ENCODE measurements at regions of chr14 and their contacts with region 1.

Region 1: DNA sequence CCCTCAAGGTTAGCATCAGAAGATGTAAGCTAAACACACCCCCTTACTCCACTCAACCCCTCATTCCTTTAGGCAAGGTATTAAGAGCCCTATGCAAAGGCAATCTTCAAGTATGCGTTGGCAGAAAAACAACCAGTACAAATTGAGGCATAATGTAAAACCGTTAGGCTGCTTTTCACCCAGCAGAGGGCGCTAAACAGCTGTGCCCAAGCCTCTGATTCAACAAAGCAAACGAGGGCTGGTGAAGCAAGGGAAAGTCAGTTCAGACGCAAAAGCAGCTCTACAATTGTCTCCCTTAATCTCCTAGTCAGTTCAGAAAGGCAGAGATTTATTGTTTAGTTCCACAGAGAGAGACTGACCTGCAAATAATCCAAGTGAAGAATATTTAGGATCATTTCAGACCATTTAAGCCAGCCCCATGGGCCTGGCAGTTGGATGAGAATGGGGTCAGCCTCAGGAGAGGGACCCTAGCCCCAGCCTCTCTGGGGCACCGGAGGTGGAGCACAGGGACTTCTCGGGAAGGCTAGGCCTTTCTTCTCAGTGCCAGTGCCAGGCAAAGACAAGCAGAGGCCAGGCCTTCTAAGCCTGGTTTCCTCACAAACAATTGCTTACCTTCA is 23.5 kb downstream of the DCAF5 start:
- DNase-seq: peak; percentile 69
- ATAC-seq: peak; percentile 95
- H3K4me3 ChIP-seq: no peak overlapping the region
- H3K27ac ChIP-seq: peak overlapping the region; percentile 72; the same call in 1 of the 2 replicates
- H3K4me1 ChIP-seq: peaks cover 25% of the 10 kb centered on the region
- H3K27me3 ChIP-seq: no peaks in the 10 kb centered on the region
- CTCF ChIP-seq: peak; percentile 91

Region 2: GRCh38 chr14:68939893-68940613 is 189.3 kb before region 1 on chr14:
- CTCF ChIA-PET with region 1: no interaction called
- POLR2A ChIA-PET with region 1: no interaction called
- in situ Hi-C with region 1: no loop called
- intact Hi-C with region 1: no loop called
- DNase-seq: peak; percentile 83
- ATAC-seq: peak; percentile 61
- H3K4me3 ChIP-seq: 0 out of 4 replicates have a peak overlapping the region, but pooled peaks of 1 of the 2 experiments have one; percentile 12
- H3K27ac ChIP-seq: peak overlapping the region; percentile 75
- H3K4me1 ChIP-seq: peaks cover 76% of the 10 kb centered on the region
- H3K27me3 ChIP-seq: no peaks in the 10 kb centered on the region
- CTCF ChIP-seq: no peak

Region 3: DNA sequence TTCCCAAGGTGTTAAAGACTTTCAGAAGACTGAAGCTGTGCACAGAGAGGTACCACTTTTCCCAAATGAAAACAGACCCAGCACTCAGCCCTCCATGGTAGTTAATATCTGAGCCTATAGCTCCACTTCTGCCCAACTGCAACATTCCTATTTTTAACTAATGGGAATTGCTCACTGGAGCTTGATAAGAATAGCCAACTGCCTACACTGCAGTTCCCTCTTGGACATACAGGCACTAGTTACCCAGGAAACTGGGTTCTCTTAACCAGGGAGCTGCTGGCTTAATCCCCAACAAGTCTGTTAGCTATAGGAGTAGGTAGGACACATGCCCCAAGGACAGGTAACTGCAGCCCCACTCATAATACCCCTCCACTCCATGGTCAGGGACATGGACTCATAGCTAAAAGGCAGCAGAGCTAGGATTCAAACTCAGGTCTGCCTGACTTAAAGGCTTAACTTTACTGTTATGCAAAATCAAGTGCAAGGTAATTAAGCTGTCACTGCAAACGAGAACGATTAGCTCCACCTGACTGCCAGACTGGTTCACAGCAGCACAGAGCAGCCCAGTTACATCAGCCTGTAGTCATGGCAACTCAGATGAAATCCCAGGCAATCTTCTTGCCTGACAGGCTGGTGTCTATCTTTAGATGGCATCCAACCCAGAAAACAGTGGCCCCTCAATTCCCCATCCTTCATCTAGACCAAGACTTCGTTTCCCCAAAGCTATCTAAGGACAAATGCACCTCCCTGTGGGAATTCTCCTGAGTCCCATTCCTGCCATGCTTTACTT is 73.2 kb before region 1 on chr14:
- CTCF ChIA-PET with region 1: no interaction called
- POLR2A ChIA-PET with region 1: no interaction called
- in situ Hi-C with region 1: no loop called
- intact Hi-C with region 1: no loop called
- DNase-seq: no peak
- ATAC-seq: no peak
- H3K4me3 ChIP-seq: no peak overlapping the region
- H3K27ac ChIP-seq: no peak overlapping the region
- H3K4me1 ChIP-seq: no peaks in the 10 kb centered on the region
- H3K27me3 ChIP-seq: no peaks in the 10 kb centered on the region
- CTCF ChIP-seq: no peak

Region 4: GRCh38 chr14:69214393-69214792 is 85.0 kb after region 1 on chr14:
- CTCF ChIA-PET with region 1: no interaction called
- POLR2A ChIA-PET with region 1: no interaction called
- in situ Hi-C with region 1: no loop called
- intact Hi-C with region 1: loop called (anchors 10 kb)
- DNase-seq: no peak
- ATAC-seq: no peak
- H3K4me3 ChIP-seq: no peak overlapping the region
- H3K27ac ChIP-seq: no peak overlapping the region
- H3K4me1 ChIP-seq: no peaks in the 10 kb centered on the region
- H3K27me3 ChIP-seq: no peaks in the 10 kb centered on the region
- CTCF ChIP-seq: no peak

Region 5: DNA sequence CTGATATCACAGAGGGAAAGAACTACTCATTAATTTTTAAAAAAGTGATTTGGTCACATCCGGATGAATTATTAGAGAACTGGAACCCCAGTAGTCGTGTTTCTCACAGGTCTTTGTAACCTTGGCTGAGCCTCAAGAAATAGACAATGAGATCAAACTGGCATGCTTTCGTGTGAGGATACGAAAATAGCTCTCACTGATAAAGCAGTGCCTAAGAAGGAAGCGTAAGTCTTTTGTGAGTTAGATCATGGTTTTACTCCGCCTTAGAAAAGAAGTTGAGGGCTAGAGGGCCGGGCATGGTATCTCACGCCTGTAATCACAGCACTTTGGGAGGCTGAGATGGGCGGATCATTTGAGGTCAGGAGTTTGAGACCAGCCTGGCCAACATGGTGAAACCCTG is 96.8 kb after region 1 on chr14:
- CTCF ChIA-PET with region 1: no interaction called
- POLR2A ChIA-PET with region 1: interaction called, 11 read pairs
- in situ Hi-C with region 1: no loop called
- intact Hi-C with region 1: no loop called
- DNase-seq: no peak
- ATAC-seq: no peak
- H3K4me3 ChIP-seq: no peak overlapping the region
- H3K27ac ChIP-seq: no peak overlapping the region
- H3K4me1 ChIP-seq: no peaks in the 10 kb centered on the region
- H3K27me3 ChIP-seq: no peaks in the 10 kb centered on the region
- CTCF ChIP-seq: no peak

Measured in Panc1 (cell line).